Activated T-helper 1 cell treated with anti-CD3 and anti-CD28 coated beads, Interleukin-12 subunit alpha, Interleukin-12 subunit beta, Interleukin-2, Interleukin-4 antibody, amounts not matched to agents 30 ng/mL and 10 ng/mL and 1 ng/mL, durations not matched to agents 14 hours and 24 hours and 36 hours (primary cell): ENCODE measurements at regions of chr19 and their contacts with region 1.

Region 1: GRCh38 chr19:17052439-17053210 is 22.6 kb downstream of the HAUS8 start:
- DNase-seq: no peak
- H3K4me3 Mint-ChIP-seq: no peak overlapping the region
- H3K27ac Mint-ChIP-seq: no peak overlapping the region
- H3K4me1 Mint-ChIP-seq: no peaks in the 10 kb centered on the region
- H3K27me3 Mint-ChIP-seq: no peaks in the 10 kb centered on the region

Region 2: DNA sequence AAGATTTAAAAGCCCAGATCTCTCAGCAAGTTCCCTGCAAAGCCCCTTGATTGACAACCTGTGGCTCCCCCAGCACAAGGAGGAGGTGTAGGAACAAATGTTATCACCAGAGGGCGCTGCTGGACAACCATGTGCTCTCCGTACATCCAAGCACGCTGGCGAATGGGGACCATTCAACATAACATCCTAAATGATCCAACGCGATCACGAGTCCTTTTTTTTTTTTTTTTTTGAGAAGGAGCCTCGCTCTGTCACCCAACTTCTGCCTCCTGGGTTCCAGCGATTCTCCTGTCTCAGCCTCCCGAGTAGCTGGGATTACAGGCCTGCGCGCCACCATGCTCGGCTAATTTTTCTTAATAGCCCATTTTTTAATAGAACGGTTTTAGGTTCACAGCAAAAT is 281.0 kb before region 1 on chr19:
- intact Hi-C with region 1: loop called (anchors 1 kb)
- DNase-seq: peak; percentile 54
- H3K4me3 Mint-ChIP-seq: no peak overlapping the region
- H3K27ac Mint-ChIP-seq: no peak overlapping the region
- H3K4me1 Mint-ChIP-seq: no peaks in the 10 kb centered on the region
- H3K27me3 Mint-ChIP-seq: no peaks in the 10 kb centered on the region

Region 3: GRCh38 chr19:16778796-16779411 is 273.7 kb before region 1 on chr19:
- intact Hi-C with region 1: loop called (anchors 2 kb)
- DNase-seq: peak; percentile 7
- H3K4me3 Mint-ChIP-seq: no peak overlapping the region
- H3K27ac Mint-ChIP-seq: no peak overlapping the region
- H3K4me1 Mint-ChIP-seq: no peaks in the 10 kb centered on the region
- H3K27me3 Mint-ChIP-seq: no peaks in the 10 kb centered on the region